ENCODE measurements at regions of chr20 and their contacts with region 1.

Region 1: GRCh38 chr20:54199721-54200176 is 8.1 kb upstream of the PFDN4 start:
- DNase-seq: peak; percentile 73 to 77
- H3K4me3 ChIP-seq: no peak overlapping the region
- H3K27ac ChIP-seq: no peak overlapping the region
- H3K4me1 ChIP-seq: no peaks in the 10 kb centered on the region
- H3K27me3 ChIP-seq: peaks cover 0 to 5% of the 10 kb centered on the region in 2 donors
- CTCF ChIP-seq: peak; percentile 71 to 84

Region 2: DNA sequence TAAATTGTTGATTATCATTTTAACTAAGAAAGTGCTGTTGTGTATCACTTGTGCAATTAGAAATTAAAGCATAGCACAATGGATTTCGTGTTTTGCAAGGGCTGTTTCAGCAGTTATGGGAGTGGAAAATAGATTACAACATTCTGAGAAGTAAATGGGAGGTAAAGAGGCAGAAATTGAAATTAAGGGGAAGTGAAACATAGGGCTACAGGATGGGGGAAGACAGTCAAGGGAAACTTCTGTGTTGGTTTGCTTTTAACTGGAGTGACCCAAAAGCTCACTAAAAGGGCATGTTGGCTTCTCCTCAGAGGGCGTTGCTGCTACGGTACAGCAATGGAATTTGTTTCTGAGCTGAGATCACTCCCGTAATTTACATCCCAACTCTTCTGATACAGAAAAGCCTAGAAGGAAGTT is 276.8 kb before region 1 on chr20:
- intact Hi-C with region 1: loop called (anchors 5 kb)
- DNase-seq: no peak
- H3K4me3 ChIP-seq: no peak overlapping the region
- H3K27ac ChIP-seq: no peak overlapping the region
- H3K4me1 ChIP-seq: peaks cover 0 to 5% (median 4%) of the 10 kb centered on the region in 4 donors
- H3K27me3 ChIP-seq: no peaks in the 10 kb centered on the region
- CTCF ChIP-seq: no peak

Region 3: GRCh38 chr20:53949319-53949889 is 250.3 kb before region 1 on chr20:
- intact Hi-C with region 1: no loop called
- DNase-seq: peak in 1 of 2 donors; percentile 40
- H3K4me3 ChIP-seq: no peak overlapping the region
- H3K27ac ChIP-seq: no peak overlapping the region
- H3K4me1 ChIP-seq: peaks cover 0 to 8% (median 2%) of the 10 kb centered on the region in 4 donors
- H3K27me3 ChIP-seq: no peaks in the 10 kb centered on the region
- CTCF ChIP-seq: no peak

Region 4: DNA sequence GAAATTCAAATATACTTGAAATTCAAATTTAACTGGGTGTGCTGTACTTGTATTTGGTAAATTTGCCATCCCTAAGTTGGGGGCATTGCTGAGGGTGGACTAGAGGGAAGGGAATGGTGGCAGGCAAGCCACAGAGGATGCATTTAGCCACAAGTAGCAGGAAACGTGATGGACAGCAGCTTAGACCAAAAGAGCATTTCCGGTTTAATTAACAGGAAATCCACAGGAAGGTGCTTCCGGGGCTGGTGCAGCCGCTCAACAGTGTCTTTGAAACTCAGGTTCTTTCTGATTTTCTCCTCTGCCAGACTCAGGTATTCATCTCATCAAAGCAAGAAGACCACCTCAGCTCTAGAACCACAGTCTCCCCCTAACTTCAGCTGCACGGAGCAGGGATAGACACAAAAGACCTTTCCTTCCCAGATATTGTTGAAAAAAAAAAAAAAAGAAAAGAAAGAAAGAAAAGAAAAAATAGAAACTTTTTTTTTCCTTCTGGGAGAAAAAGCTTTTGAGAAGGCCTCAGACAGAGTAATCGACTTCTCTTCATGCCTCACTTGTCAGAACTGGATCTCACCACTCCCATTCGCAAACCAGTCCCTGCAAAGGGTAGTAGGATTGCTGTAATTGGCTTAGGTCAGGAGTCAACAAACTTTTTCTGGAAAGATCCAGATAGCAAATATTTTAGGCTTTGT is 121.3 kb before region 1 on chr20:
- intact Hi-C with region 1: no loop called
- DNase-seq: no peak
- H3K4me3 ChIP-seq: no peak overlapping the region
- H3K27ac ChIP-seq: no peak overlapping the region
- H3K4me1 ChIP-seq: no peaks in the 10 kb centered on the region
- H3K27me3 ChIP-seq: peaks cover 0 to 6% of the 10 kb centered on the region in 2 donors
- CTCF ChIP-seq: no peak

Region 5: GRCh38 chr20:54123587-54124180 is 76.1 kb before region 1 on chr20:
- intact Hi-C with region 1: no loop called
- DNase-seq: no peak
- H3K4me3 ChIP-seq: no peak overlapping the region
- H3K27ac ChIP-seq: no peak overlapping the region
- H3K4me1 ChIP-seq: no peaks in the 10 kb centered on the region
- H3K27me3 ChIP-seq: no peaks in the 10 kb centered on the region
- CTCF ChIP-seq: no peak

Region 6: DNA sequence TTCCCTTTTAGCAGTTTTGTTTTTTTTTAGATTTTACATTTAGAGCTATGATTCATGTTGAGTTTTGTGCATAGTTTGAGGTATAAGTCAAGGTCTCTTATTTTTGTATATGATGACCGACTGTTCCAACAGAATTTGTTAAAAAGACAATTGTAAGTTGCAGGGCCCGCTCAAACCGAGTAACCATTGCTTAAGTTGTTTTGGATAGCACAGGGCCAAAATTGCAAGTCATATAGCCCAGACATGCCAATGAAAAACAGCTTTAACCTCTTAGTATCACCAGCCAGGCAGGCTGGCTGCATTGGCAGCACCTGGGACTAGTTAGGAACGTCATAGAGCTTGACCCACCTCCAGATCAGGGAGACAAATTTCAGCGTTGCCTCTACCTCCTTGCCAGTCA is 55.4 kb after region 1 on chr20:
- intact Hi-C with region 1: no loop called
- DNase-seq: no peak
- H3K4me3 ChIP-seq: no peak overlapping the region
- H3K27ac ChIP-seq: no peak overlapping the region
- H3K4me1 ChIP-seq: no peaks in the 10 kb centered on the region
- H3K27me3 ChIP-seq: no peaks in the 10 kb centered on the region
- CTCF ChIP-seq: no peak

Measured in tibial artery (tissue), 4 donors.